ENCODE measurements at regions of chr1 and their contacts with region 1.

Region 1: GRCh38 chr1:39720094-39720999 is 18.3 kb upstream of the PPIE start:
- DNase-seq: peak; percentile 48 to 76 (median 56)
- ATAC-seq: peak; percentile 85
- H3K4me3 ChIP-seq: no peak overlapping the region
- H3K27ac ChIP-seq: no peak overlapping the region
- H3K4me1 ChIP-seq: no peaks in the 10 kb centered on the region
- H3K27me3 ChIP-seq: peaks cover 3 to 4% of the 10 kb centered on the region in 2 experiments; a peak in 2 of 5 replicates
- CTCF ChIP-seq: peak; percentile 64 to 97 (median 70); a peak in 5 of 6 replicates
- EP300 ChIP-seq: no peak
- POLR2A ChIP-seq: no peak
- RAD21 ChIP-seq: peak; percentile 93 to 97

Region 2: GRCh38 chr1:39391691-39392679 is 328.4 kb before region 1 on chr1:
- CTCF ChIA-PET with region 1: no interaction called
- POLR2A ChIA-PET with region 1: no interaction called
- in situ Hi-C with region 1: no loop called
- intact Hi-C with region 1: no loop called
- DNase-seq: peak in 3 of 4 experiments; percentile 27 to 82 (median 78)
- ATAC-seq: peak; percentile 81
- H3K4me3 ChIP-seq: no peak overlapping the region
- H3K27ac ChIP-seq: peak overlapping the region; percentile 81
- H3K4me1 ChIP-seq: peaks cover 32 to 78% of the 10 kb centered on the region in 2 experiments
- H3K27me3 ChIP-seq: no peaks in the 10 kb centered on the region
- CTCF ChIP-seq: no peak
- EP300 ChIP-seq: peak; percentile 37
- POLR2A ChIP-seq: peak; percentile 41
- RAD21 ChIP-seq: no peak; a peak in 1 of 4 replicates

Region 3: DNA sequence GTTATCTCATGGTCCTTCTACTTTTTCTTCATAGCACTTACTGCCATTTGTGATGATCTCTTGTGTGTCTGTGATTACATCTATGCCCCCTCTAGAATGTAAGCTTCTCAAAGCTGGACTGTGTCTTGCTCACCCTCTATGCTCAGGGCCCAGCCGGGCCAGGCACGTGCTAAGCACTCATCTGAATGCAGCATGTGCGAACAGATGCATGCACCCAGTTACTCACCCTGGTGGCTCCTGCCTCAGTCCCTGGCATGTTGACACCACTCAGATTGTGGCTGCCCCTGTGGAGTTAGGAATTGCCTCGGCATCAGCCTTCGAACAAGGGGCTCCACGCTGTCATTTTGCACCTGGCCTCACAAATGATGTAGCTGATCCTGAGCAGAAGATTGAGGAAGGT is 124.2 kb before region 1 on chr1:
- CTCF ChIA-PET with region 1: no interaction called
- POLR2A ChIA-PET with region 1: no interaction called
- in situ Hi-C with region 1: loop called (anchors 5 kb)
- intact Hi-C with region 1: no loop called
- DNase-seq: no peak
- ATAC-seq: peak; percentile 43; the same call in 1 of the 3 replicates
- H3K4me3 ChIP-seq: no peak overlapping the region
- H3K27ac ChIP-seq: no peak overlapping the region
- H3K4me1 ChIP-seq: no peaks in the 10 kb centered on the region; a peak in 1 of 5 replicates
- H3K27me3 ChIP-seq: peaks cover 3 to 21% of the 10 kb centered on the region in 2 experiments; a peak in 4 of 5 replicates
- CTCF ChIP-seq: no peak
- EP300 ChIP-seq: no peak
- POLR2A ChIP-seq: no peak
- RAD21 ChIP-seq: no peak

Region 4: DNA sequence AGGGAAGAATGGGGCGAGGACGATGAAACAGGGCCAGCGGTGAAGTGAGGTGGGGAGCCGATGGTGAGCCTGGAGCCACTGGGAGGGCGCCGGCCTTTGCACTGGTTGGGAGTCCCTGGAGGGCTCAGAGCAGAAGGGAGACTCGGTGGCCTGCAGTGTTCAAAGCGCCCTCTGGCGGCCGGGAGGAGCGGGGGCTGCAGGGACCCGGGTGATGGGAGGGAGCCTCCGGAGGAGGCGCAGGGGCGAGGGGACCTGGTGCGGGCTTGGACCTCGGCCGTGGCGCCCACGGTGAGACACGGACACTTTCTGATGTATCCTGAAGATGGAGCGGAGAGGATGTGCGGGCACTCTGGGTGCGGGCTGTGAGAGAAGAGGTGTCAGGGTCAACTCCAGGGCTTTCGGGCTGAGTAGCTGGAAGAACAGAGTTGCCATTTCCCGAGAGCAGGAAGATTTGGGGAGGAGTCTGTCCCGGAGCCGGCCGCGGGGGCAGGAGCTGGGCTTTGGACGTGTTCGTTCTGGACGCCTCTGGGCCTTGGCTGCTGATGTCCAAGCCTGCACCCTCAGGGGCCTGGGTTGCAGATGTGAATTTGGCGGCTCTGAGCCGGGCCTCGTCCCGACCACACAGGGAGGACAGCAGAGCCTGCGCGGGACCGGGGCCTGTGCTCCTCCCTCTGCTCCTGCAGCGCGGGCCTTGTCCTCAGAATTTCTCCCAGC is 110.6 kb before region 1 on chr1:
- CTCF ChIA-PET with region 1: interaction called, 22 read pairs
- POLR2A ChIA-PET with region 1: no interaction called
- in situ Hi-C with region 1: no loop called
- intact Hi-C with region 1: loop called (anchors 1 kb)
- DNase-seq: peak; percentile 64 to 72 (median 71)
- ATAC-seq: peak; percentile 90
- H3K4me3 ChIP-seq: no peak overlapping the region
- H3K27ac ChIP-seq: no peak overlapping the region
- H3K4me1 ChIP-seq: peaks cover 0 to 11% of the 10 kb centered on the region in 2 experiments; a peak in 2 of 5 replicates
- H3K27me3 ChIP-seq: no peaks in the 10 kb centered on the region
- CTCF ChIP-seq: peak; percentile 67 to 89 (median 67)
- EP300 ChIP-seq: no peak
- POLR2A ChIP-seq: no peak
- RAD21 ChIP-seq: peak in 1 of 2 experiments; percentile 28; a peak in 1 of 4 replicates

Region 5: DNA sequence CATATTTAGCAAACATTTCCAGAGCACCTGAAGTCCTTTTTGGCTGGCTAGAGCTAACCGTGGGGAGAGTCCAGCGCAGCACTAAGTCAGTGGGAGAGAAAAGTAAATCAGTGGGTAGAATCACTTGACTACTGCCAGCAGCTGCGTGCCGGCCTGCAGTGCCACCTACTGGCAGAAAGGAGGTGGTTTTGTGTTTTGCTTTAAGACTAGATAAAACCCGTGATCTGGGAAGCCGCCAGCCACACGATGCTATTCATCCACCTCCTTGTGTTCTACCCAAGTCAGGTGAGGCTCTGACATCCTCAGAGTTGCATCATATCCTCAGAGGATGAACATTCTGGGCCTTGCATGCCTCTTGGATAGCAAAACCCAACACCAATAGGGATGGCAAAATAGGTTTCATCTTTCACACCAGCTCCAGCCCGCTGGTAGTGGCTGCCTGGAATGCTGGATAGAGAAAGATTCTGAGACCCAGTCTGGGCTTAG is 66.8 kb before region 1 on chr1:
- CTCF ChIA-PET with region 1: interaction called, 9 read pairs
- POLR2A ChIA-PET with region 1: no interaction called
- in situ Hi-C with region 1: no loop called
- intact Hi-C with region 1: loop called (anchors 1 kb)
- DNase-seq: peak; percentile 73 to 87 (median 76)
- ATAC-seq: peak; percentile 81
- H3K4me3 ChIP-seq: no peak overlapping the region
- H3K27ac ChIP-seq: no peak overlapping the region
- H3K4me1 ChIP-seq: peaks cover 7% of the 10 kb centered on the region in 2 experiments; a peak in 2 of 5 replicates
- H3K27me3 ChIP-seq: peaks cover 3 to 18% of the 10 kb centered on the region in 2 experiments; a peak in 4 of 5 replicates
- CTCF ChIP-seq: peak; percentile 92 to 97 (median 95)
- EP300 ChIP-seq: no peak
- POLR2A ChIP-seq: no peak
- RAD21 ChIP-seq: peak; percentile 88 to 95

Region 6: DNA sequence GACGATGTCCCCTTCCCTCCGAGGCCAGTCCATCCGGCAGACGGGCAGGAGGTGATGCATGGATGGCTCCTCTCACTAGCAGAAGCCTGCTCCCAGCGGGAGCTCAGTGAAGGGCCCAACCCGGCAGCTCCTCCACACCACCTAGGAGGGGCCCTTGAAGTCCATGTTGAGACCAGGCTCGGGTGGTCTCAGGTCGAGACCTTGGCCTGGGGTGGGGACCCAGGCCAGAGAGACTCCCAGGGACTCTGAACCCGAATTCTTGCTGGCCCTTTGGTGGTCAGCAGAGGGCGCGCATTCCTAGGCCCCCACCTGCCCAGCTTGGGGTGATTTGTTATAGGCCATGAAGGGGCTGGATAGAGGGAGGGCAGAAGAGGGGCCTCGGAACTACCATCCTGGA is 47.8 kb before region 1 on chr1:
- CTCF ChIA-PET with region 1: interaction called, 24 read pairs
- POLR2A ChIA-PET with region 1: interaction called, 4 read pairs
- in situ Hi-C with region 1: no loop called
- intact Hi-C with region 1: loop called (anchors 5 kb)
- DNase-seq: peak; percentile 67 to 82 (median 79)
- ATAC-seq: peak; percentile 89
- H3K4me3 ChIP-seq: no peak overlapping the region
- H3K27ac ChIP-seq: no peak overlapping the region
- H3K4me1 ChIP-seq: peaks cover 12 to 18% of the 10 kb centered on the region in 2 experiments
- H3K27me3 ChIP-seq: peaks cover 21 to 47% of the 10 kb centered on the region in 2 experiments; a peak in 3 of 5 replicates
- CTCF ChIP-seq: peak; percentile 84 to 89 (median 85)
- EP300 ChIP-seq: no peak
- POLR2A ChIP-seq: no peak
- RAD21 ChIP-seq: peak; percentile 53 to 71

Region 7: GRCh38 chr1:39701049-39701439 is 19.3 kb before region 1 on chr1:
- CTCF ChIA-PET with region 1: interaction called, 28 read pairs
- POLR2A ChIA-PET with region 1: interaction called, 3 read pairs
- in situ Hi-C with region 1: no loop called
- intact Hi-C with region 1: loop called (anchors 1 kb)
- DNase-seq: no peak
- ATAC-seq: no peak
- H3K4me3 ChIP-seq: no peak overlapping the region
- H3K27ac ChIP-seq: no peak overlapping the region
- H3K4me1 ChIP-seq: peaks cover 5 to 12% of the 10 kb centered on the region in 2 experiments; a peak in 3 of 5 replicates
- H3K27me3 ChIP-seq: peaks cover 9 to 12% of the 10 kb centered on the region in 2 experiments; a peak in 4 of 5 replicates
- CTCF ChIP-seq: no peak
- EP300 ChIP-seq: no peak
- POLR2A ChIP-seq: no peak
- RAD21 ChIP-seq: no peak

Region 8: DNA sequence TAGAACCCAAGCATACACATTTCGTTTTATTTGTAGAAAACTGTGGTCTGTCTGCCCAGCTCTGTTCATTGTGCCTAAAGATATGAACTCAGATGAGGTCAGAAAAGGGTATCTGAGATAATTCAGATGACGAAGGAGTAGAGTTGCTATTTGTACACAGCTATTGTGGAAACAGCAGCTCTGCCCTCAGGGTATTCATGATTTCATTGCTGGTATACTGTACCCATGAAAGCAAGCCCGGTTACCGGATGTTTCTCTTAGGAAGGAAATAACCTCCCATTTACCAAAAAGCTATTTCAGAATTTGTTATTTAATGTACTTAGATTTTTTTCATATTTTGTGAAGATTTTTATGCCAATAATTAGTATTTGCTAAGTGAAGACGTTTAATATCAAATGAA is 690.9 kb after region 1 on chr1:
- CTCF ChIA-PET with region 1: no interaction called
- POLR2A ChIA-PET with region 1: no interaction called
- in situ Hi-C with region 1: no loop called
- intact Hi-C with region 1: no loop called
- DNase-seq: no peak
- ATAC-seq: no peak
- H3K4me3 ChIP-seq: no peak overlapping the region
- H3K27ac ChIP-seq: no peak overlapping the region
- H3K4me1 ChIP-seq: no peaks in the 10 kb centered on the region
- H3K27me3 ChIP-seq: no peaks in the 10 kb centered on the region
- CTCF ChIP-seq: no peak
- EP300 ChIP-seq: no peak
- POLR2A ChIP-seq: no peak
- RAD21 ChIP-seq: no peak

Measured in K562 (cell line).